ENCODE measurements at regions of chr5 and their contacts with region 1.

Region 1: GRCh38 chr5:146653560-146653959 is 137.6 kb upstream of the GPR151 start:
- DNase-seq: no peak
- H3K4me3 ChIP-seq: no peak overlapping the region
- H3K27ac ChIP-seq: no peak overlapping the region
- H3K4me1 ChIP-seq: no peaks in the 10 kb centered on the region
- H3K27me3 ChIP-seq: no peaks in the 10 kb centered on the region
- CTCF ChIP-seq: no peak
- POLR2A ChIP-seq: no peak

Region 2: GRCh38 chr5:146959360-146959759 is 305.8 kb after region 1 on chr5:
- intact Hi-C with region 1: loop called (anchors 10 kb)
- DNase-seq: no peak
- H3K4me3 ChIP-seq: no peak overlapping the region
- H3K27ac ChIP-seq: no peak overlapping the region
- H3K4me1 ChIP-seq: no peaks in the 10 kb centered on the region
- H3K27me3 ChIP-seq: no peaks in the 10 kb centered on the region
- CTCF ChIP-seq: no peak
- POLR2A ChIP-seq: no peak